Esophagus squamous epithelium (tissue), 5 donors: ENCODE measurements at regions of chr5 and their contacts with region 1.

Region 1: DNA sequence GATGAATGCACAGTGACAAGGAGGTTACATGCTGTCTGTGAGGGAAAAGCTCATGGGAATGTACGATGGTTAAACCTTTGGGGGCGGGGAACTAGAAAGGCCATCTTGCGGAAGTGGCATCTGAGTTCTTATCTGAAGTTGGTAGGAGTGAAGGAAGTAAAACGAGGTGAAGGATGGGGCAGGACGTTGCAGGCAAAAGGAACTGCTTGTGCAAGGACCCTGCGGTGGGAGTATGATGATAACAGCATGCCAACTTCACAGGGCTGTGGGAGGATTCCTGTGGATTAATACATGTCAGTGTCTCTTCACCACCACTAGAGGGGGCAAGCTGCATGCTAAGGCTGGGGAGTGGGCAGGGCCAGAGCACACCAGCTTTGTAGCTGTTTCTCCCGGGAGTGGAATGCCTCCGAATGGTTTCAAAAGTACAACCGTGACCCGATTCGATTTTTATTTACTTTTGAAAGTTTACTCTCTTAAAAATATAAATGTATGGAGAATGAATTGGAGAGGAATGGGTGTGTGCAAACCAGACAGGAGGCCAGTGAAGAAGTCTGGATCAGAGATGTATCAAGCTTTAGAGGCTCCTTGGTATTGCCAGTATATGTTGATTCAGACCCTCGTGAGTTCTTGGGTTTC is 62.5 kb downstream of the CYFIP2 start:
- DNase-seq: peak; percentile 9
- H3K4me3 ChIP-seq: peak overlapping the region in 2 of 4 donors; percentile 7 to 42
- H3K27ac ChIP-seq: no peak overlapping the region
- H3K4me1 ChIP-seq: peaks cover 0 to 9% (median 0%) of the 10 kb centered on the region in 3 donors
- H3K27me3 ChIP-seq: no peaks in the 10 kb centered on the region
- CTCF ChIP-seq: peak; percentile 64 to 90 (median 84)
- POLR2A ChIP-seq: no peak

Region 2: DNA sequence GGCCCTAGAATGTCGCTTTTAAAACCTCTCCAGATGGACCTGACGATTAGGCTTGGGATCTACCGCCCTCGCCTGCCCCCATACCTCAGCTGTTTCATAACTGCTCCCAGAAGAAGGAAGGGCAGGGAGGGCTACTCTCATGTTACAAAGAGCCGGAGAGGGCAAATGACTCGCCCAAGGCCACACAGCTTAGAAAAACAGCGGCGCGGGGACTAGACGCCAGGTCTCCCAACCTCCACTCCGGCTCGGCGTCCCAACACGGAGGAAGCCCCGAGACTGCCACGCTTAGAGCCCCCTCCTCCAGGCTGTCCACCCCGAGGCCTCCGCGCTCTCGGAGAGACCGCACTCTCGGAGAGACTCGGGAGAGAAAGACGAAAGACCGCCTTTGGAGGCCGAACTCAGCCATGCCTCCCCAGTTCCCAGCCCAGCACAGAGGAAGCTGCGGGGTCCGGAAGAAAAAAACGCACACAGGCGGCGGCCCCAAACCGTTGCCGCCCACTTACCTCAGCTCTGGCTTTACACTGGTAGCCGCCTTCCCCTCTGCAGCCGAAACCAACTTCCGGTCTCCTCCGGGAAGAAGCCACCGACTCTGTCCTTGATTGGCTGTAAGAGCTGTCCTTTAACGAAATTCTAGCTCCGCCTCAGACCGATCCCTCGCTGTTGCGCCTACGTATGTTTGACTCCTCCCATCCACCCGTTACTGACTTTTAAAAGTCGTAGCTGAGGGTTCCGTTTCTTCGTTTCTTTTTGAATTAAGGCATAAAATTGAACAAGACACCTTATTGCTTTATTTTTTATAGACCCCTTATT is 185.9 kb before region 1 on chr5 and contains the start of gene MED7:
- intact Hi-C with region 1: no loop called
- DNase-seq: peak; percentile 82
- H3K4me3 ChIP-seq: peak within 1 kb of the TSS; percentile 68 to 89 (median 82)
- H3K27ac ChIP-seq: peak within 1 kb of the TSS; percentile 89 to 93 (median 92)
- H3K4me1 ChIP-seq: peaks cover 12 to 21% (median 14%) of the 10 kb centered on the region in 3 donors
- H3K27me3 ChIP-seq: no peaks in the 10 kb centered on the region
- CTCF ChIP-seq: no peak
- POLR2A ChIP-seq: peak in 3 of 4 donors; percentile 69 to 82 (median 78)
- total RNA-seq, gene MED7: 4.7 to 8.3 (median 6.9) TPM

Region 3: DNA sequence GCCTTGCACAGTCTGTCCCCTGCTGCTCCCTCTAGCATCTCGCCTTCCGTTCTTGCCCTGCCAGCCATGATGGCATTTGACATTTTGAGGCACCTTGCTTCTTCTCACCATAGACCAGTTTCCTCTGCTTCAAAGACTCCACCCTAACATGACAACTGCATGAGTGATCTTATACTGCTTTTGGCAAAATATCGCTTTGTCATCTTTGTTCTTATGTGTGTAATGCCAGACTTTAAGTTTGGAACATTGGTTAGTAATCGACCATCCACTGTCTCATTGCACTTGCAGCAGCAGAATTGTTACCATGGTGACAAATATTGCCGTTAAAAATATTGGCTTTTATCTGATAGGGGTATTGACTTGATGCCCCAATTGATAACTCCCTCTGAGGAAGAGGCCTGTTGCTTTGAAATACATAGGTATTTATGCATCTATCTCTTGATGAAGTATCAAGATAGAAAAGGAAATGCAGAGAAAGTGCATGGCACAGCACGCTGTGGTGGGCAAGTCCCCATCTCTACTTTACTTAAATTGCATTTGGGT is 169.1 kb before region 1 on chr5:
- intact Hi-C with region 1: loop called (anchors 10 kb)
- DNase-seq: no peak
- H3K4me3 ChIP-seq: no peak overlapping the region
- H3K27ac ChIP-seq: no peak overlapping the region
- H3K4me1 ChIP-seq: no peaks in the 10 kb centered on the region
- H3K27me3 ChIP-seq: peaks cover 0 to 4% (median 0%) of the 10 kb centered on the region in 4 donors
- CTCF ChIP-seq: no peak
- POLR2A ChIP-seq: no peak